PC-3 (cell line): ENCODE measurements at regions of chr2 and their contacts with region 1.

Region 1: GRCh38 chr2:105782123-105782522 is 37.4 kb downstream of the NCK2 start:
- DNase-seq: no peak
- ATAC-seq: no peak
- H3K4me3 ChIP-seq: no peak overlapping the region
- H3K27ac ChIP-seq: no peak overlapping the region
- H3K4me1 ChIP-seq: no peaks in the 10 kb centered on the region
- H3K27me3 ChIP-seq: no peaks in the 10 kb centered on the region
- CTCF ChIP-seq: peak; percentile 22; the same call in 1 of the 2 replicates

Region 2: GRCh38 chr2:105919826-105920225 is 137.7 kb after region 1 on chr2:
- CTCF ChIA-PET with region 1: no interaction called
- POLR2A ChIA-PET with region 1: no interaction called
- intact Hi-C with region 1: loop called (anchors 5 kb)
- DNase-seq: peak; percentile 61
- ATAC-seq: peak; percentile 41
- H3K4me3 ChIP-seq: no peak overlapping the region
- H3K27ac ChIP-seq: peak overlapping the region; percentile 84
- H3K4me1 ChIP-seq: peaks cover 25% of the 10 kb centered on the region
- H3K27me3 ChIP-seq: no peaks in the 10 kb centered on the region
- CTCF ChIP-seq: peak; percentile 68

Region 3: DNA sequence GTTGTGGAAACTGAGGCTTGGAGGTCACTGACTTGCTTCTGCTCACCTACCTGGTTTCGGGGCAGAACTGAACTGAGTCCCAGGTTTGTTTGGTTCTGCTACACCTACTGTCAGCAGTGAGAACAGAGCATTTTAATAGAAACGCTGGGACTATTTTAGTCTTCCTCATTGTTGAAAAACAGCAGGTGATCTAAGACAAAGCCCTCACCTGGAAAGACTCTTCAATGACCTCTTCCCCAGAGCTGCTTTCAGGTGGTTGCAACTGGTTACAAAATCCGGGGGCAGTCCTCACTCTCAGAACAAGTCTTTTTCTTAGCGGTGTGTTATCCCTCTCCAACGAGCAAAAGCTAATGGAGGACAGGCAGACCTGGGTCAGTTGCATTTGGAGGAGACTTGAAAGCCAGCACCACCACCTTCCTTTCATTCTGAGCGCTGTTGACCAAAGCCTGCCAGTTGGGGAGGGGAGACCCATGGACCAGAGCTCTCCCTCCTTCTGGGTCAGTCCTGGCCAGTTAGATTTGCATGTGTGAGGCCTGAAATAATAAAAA is 179.6 kb after region 1 on chr2:
- CTCF ChIA-PET with region 1: no interaction called
- POLR2A ChIA-PET with region 1: no interaction called
- intact Hi-C with region 1: no loop called
- DNase-seq: no peak
- ATAC-seq: no peak
- H3K4me3 ChIP-seq: no peak overlapping the region
- H3K27ac ChIP-seq: no peak overlapping the region
- H3K4me1 ChIP-seq: no peaks in the 10 kb centered on the region
- H3K27me3 ChIP-seq: peaks cover 8% of the 10 kb centered on the region; the same call in 1 of the 2 replicates
- CTCF ChIP-seq: no peak